ENCODE measurements at regions of chr6 and their contacts with region 1.

Region 1: DNA sequence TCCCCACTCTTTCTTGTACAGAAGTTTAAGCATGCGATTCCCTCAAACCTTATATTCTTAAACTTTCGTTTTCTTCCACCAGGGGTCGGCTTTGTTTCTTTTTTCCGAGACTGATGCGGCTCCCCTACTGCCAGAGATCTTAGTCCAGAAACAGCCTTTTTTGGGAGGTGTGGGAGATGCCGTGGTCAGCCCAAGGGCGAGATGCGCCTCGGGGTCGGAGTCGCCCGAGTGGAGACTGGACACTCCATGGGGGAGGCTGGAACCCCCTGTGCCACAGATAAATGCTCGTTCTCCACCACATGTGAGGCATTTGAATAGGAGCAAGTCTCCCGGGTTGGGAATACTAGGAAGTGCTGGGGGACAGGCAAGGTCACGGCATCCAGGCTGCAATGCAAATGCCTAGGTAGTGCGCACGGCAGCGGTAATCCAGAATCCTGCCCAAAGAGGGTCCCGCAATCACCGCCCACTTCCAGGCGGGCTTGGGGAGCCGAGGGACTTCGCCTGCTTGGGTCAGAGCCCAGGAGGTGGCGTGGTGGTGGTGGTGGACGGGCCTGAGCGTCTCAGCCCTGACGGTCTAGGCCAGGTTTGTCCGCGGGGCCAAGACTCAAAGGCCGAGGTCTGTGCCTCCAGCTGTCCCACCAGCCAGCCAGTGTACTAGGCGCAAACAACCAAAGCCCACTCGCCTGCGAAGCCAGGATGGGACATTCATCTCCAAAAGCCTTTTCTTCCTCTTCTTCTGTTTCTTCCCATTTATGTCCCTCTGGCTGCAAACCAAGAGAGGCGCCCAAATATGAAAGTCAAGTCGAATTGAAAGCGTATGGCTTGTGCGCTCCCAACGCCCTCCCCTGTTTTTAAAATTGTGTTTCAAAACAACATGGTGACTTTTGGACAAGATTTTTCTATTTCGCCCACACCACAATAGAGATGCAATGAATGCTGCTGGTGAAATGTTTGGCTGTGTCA is 39.3 kb upstream of the OSTM1 start:
- DNase-seq: no peak
- ATAC-seq: peak; percentile 71

Region 2: GRCh38 chr6:108526739-108527174 is 412.9 kb after region 1 on chr6:
- intact Hi-C with region 1: loop called (anchors 5 kb)
- DNase-seq: no peak
- ATAC-seq: peak; percentile 63

Measured in sciatic nerve (tissue), 2 donors.